Heart left ventricle (tissue), 16 donors: ENCODE measurements at regions of chr16 and their contacts with region 1.

Region 1: GRCh38 chr16:2752035-2752849 is at the start of gene SRRM2:
- DNase-seq: peak; percentile 95 to 97 (median 96)
- ATAC-seq: peak; percentile 90 to 96 (median 96)
- H3K4me3 ChIP-seq: peak within 1 kb of the TSS; percentile 56 to 99 (median 88)
- H3K27ac ChIP-seq: peak within 1 kb of the TSS; percentile 97 to 100 (median 98)
- H3K4me1 ChIP-seq: peaks cover 11 to 49% (median 41%) of the 10 kb centered on the region in 12 donors
- H3K27me3 ChIP-seq: no peaks in the 10 kb centered on the region
- CTCF ChIP-seq: no peak
- POLR2A ChIP-seq: peak; percentile 85 to 93
- total RNA-seq, gene SRRM2: 112 to 315 (median 233) TPM

Region 2: DNA sequence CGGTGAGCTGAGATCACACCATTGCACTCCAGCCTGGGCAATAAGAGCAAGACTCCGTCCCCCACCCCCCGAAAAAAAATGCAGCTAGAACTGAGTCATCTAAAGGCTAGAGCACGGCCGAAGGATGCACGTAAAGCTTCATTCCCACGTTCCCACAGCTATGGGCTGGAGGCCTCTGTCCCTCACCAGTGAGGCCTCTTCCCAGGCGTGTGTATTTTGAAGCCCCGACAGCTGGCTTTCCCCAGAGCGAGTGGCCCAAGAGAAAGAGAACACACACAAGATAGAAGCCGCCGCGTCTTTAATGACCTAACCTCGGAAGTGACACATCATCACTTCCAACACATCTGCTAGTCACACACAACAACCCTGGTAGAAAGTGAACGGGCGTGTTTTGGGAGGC is 76.5 kb before region 1 on chr16:
- intact Hi-C with region 1: loop called in 2 of 10 experiments (anchors 2 to 5 kb)
- DNase-seq: peak in 1 of 5 donors; percentile 20
- ATAC-seq: no peak
- H3K4me3 ChIP-seq: no peak overlapping the region
- H3K27ac ChIP-seq: no peak overlapping the region
- H3K4me1 ChIP-seq: peaks cover 0 to 25% (median 17%) of the 10 kb centered on the region in 12 donors
- H3K27me3 ChIP-seq: no peaks in the 10 kb centered on the region
- CTCF ChIP-seq: no peak
- POLR2A ChIP-seq: no peak

Region 3: DNA sequence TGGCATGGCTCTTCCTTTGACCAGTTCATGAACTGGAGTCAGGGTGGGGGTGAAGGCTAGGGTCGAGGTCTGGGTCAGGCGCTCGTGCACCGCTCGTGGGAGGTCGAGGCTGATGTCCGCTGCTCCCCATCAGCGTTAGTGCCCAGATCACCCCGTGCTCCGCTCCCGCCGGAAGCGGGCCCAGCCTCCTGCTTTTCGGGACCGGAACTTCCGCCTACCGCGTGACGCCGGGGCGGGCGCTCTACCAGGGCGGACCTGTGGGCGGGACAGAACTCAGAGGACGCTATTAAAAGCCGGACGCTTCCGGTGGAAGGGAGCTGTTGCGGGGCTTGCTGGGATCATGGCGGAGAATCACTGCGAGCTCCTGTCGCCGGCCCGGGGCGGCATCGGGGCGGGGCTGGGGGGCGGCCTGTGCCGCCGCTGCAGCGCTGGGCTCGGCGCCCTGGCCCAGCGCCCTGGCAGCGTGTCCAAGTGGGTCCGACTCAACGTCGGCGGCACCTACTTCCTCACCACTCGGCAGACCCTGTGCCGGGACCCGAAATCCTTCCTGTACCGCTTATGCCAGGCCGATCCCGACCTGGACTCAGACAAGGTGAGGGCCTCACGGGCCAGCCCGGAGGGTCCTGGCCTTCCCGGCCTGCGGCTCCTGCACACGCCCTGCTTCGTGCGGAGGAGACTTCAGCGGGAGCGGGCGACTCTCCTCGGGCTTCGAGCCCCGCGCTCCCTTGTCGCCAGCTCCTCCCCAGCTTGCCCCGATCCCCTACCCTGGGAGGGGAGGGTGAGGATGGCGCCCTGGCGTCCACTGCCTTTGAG is 69.8 kb before region 1 on chr16 and contains the start of gene KCTD5:
- intact Hi-C with region 1: loop called in 1 of 10 experiments (anchors 5 kb)
- DNase-seq: peak; percentile 96 to 98 (median 97)
- ATAC-seq: peak; percentile 95 to 97 (median 96)
- H3K4me3 ChIP-seq: peak within 1 kb of the TSS; percentile 57 to 100 (median 90)
- H3K27ac ChIP-seq: peak within 1 kb of the TSS; percentile 63 to 94 (median 88)
- H3K4me1 ChIP-seq: peaks cover 0 to 32% (median 17%) of the 10 kb centered on the region in 12 donors
- H3K27me3 ChIP-seq: no peaks in the 10 kb centered on the region
- CTCF ChIP-seq: peak in 1 of 12 donors; percentile 16
- POLR2A ChIP-seq: peak; percentile 18 to 89
- total RNA-seq, gene KCTD5: 9.1 to 24.3 (median 11.1) TPM

Region 4: GRCh38 chr16:2692948-2693651 is 59.1 kb before region 1 on chr16:
- intact Hi-C with region 1: loop called in 1 of 10 experiments (anchors 10 kb)
- DNase-seq: peak in 1 of 5 donors; percentile 57
- ATAC-seq: peak in 3 of 4 donors; percentile 1 to 13 (median 12)
- H3K4me3 ChIP-seq: peak overlapping the region in 5 of 12 donors; percentile 19 to 40 (median 28)
- H3K27ac ChIP-seq: peak overlapping the region; percentile 64 to 91 (median 78)
- H3K4me1 ChIP-seq: peaks cover 0 to 40% (median 32%) of the 10 kb centered on the region in 12 donors
- H3K27me3 ChIP-seq: no peaks in the 10 kb centered on the region
- CTCF ChIP-seq: no peak
- POLR2A ChIP-seq: no peak

Region 5: GRCh38 chr16:2720719-2721633 is 31.3 kb before region 1 on chr16:
- intact Hi-C with region 1: loop called in 1 of 10 experiments (anchors 1 kb)
- DNase-seq: peak; percentile 83 to 91 (median 86)
- ATAC-seq: peak; percentile 68 to 92 (median 84)
- H3K4me3 ChIP-seq: peak overlapping the region; percentile 48 to 90 (median 66)
- H3K27ac ChIP-seq: peak overlapping the region in 11 of 12 donors; percentile 22 to 85 (median 74)
- H3K4me1 ChIP-seq: peaks cover 0 to 27% (median 13%) of the 10 kb centered on the region in 12 donors
- H3K27me3 ChIP-seq: peaks cover 0 to 8% (median 0%) of the 10 kb centered on the region in 9 donors
- CTCF ChIP-seq: peak; percentile 34 to 92 (median 80)
- POLR2A ChIP-seq: no peak

Region 6: DNA sequence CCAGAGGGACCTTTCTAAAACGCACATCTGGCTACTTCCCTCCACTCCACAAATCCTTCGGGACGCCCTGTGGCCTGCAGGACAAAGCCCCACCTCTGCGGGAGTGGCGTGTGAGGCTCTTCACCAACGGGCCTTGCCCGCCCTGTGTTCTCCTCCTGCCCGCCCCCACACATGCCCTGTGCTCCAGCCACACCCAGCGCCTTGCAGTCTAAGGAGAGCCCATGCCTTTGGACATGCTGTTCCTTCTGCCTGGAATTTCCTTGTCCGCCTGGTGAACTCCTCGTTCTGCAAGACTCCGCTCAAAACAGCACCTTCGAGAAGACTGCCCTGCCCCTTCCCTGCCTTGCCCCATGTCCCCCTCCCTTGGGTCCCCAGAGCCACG is 17.4 kb after region 1 on chr16:
- intact Hi-C with region 1: loop called in 1 of 10 experiments (anchors 2 kb)
- DNase-seq: peak in 2 of 5 donors; percentile 25 to 41
- ATAC-seq: peak in 2 of 4 donors; percentile 7 to 29
- H3K4me3 ChIP-seq: no peak overlapping the region
- H3K27ac ChIP-seq: no peak overlapping the region
- H3K4me1 ChIP-seq: peaks cover 0 to 35% (median 8%) of the 10 kb centered on the region in 12 donors
- H3K27me3 ChIP-seq: no peaks in the 10 kb centered on the region
- CTCF ChIP-seq: no peak
- POLR2A ChIP-seq: no peak

Region 7: DNA sequence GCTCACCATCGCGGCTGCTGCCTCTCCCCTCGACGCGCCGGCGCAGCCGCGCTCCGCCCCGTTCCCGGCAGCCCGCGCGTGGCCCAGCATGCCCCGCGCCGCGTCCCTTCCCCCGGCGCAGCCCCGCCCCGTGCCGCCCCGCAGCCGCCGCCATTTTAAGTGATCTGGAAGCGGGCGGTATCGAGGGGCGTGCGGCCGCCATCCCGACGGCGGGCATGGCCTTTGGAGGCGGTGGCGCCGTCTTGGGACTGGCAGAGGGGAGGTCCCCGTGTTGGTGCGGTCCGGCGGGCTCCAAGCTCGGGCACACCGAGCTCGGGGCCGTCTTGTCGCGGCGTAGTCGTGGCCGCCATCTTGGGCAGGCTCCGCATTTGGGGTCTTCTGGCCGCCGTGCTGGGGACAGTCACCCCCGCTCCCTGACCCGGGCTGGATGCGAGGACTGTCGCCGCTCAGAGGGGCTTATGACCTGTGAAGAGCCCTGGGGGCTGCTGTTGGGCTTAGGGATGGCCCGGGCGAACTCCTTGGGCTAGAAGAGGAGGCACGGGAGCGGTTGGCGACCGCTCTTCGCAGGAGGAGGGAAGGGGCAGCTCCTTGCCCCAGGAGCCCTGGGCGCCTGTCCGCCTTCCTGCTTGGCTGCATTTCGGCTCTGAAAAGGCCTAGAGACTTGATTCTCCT is 25.1 kb after region 1 on chr16 and contains the start of gene ELOB:
- intact Hi-C with region 1: loop called in 6 of 10 experiments (anchors 1 to 2 kb)
- DNase-seq: peak; percentile 88 to 95 (median 92)
- ATAC-seq: peak; percentile 82 to 95 (median 92)
- H3K4me3 ChIP-seq: peak within 1 kb of the TSS; percentile 65 to 100 (median 93)
- H3K27ac ChIP-seq: peak within 1 kb of the TSS; percentile 96 to 100 (median 100)
- H3K4me1 ChIP-seq: peaks cover 2 to 44% (median 26%) of the 10 kb centered on the region in 12 donors
- H3K27me3 ChIP-seq: no peaks in the 10 kb centered on the region
- CTCF ChIP-seq: no peak
- POLR2A ChIP-seq: peak; percentile 5 to 80
- total RNA-seq, gene ELOB: 213 to 1,067 (median 294) TPM